Tibial artery (tissue), 4 donors: ENCODE measurements at regions of chr12 and their contacts with region 1.

Region 1: GRCh38 chr12:89461649-89462612 is 62.7 kb downstream of the GALNT4 start:
- DNase-seq: no peak
- H3K4me3 ChIP-seq: peak overlapping the region in 1 of 2 donors; percentile 10
- H3K27ac ChIP-seq: peak overlapping the region; percentile 21 to 49
- H3K4me1 ChIP-seq: peaks cover 0 to 12% (median 0%) of the 10 kb centered on the region in 4 donors
- H3K27me3 ChIP-seq: no peaks in the 10 kb centered on the region
- CTCF ChIP-seq: peak; percentile 60 to 83

Region 2: GRCh38 chr12:89051065-89051677 is 410.8 kb before region 1 on chr12:
- intact Hi-C with region 1: loop called (anchors 2 kb)
- DNase-seq: no peak
- H3K4me3 ChIP-seq: no peak overlapping the region
- H3K27ac ChIP-seq: no peak overlapping the region
- H3K4me1 ChIP-seq: no peaks in the 10 kb centered on the region
- H3K27me3 ChIP-seq: no peaks in the 10 kb centered on the region
- CTCF ChIP-seq: peak; percentile 92

Region 3: GRCh38 chr12:89494411-89495231 is 32.7 kb after region 1 on chr12:
- intact Hi-C with region 1: no loop called
- DNase-seq: no peak
- H3K4me3 ChIP-seq: no peak overlapping the region
- H3K27ac ChIP-seq: no peak overlapping the region
- H3K4me1 ChIP-seq: no peaks in the 10 kb centered on the region
- H3K27me3 ChIP-seq: no peaks in the 10 kb centered on the region
- CTCF ChIP-seq: no peak

Region 4: GRCh38 chr12:89542912-89543592 is 81.1 kb after region 1 on chr12:
- intact Hi-C with region 1: no loop called
- DNase-seq: peak; percentile 57 to 69
- H3K4me3 ChIP-seq: no peak overlapping the region
- H3K27ac ChIP-seq: no peak overlapping the region
- H3K4me1 ChIP-seq: peaks cover 0 to 20% (median 9%) of the 10 kb centered on the region in 4 donors
- H3K27me3 ChIP-seq: no peaks in the 10 kb centered on the region
- CTCF ChIP-seq: peak; percentile 74 to 81